GM12878 (cell line): ENCODE measurements at regions of chr3 and their contacts with region 1.

Region 1: GRCh38 chr3:189967254-189967865 is 153.3 kb downstream of the P3H2 start:
- DNase-seq: no peak
- ATAC-seq: peak; percentile 89
- H3K4me3 ChIP-seq: no peak overlapping the region
- H3K27ac ChIP-seq: no peak overlapping the region
- H3K4me1 ChIP-seq: no peaks in the 10 kb centered on the region
- H3K27me3 ChIP-seq: no peaks in the 10 kb centered on the region
- CTCF ChIP-seq: peak; percentile 75 to 81 (median 81)
- EP300 ChIP-seq: no peak
- POLR2A ChIP-seq: no peak
- RAD21 ChIP-seq: peak; percentile 93

Region 2: GRCh38 chr3:189724356-189724755 is 243.0 kb before region 1 on chr3:
- CTCF ChIA-PET with region 1: no interaction called
- POLR2A ChIA-PET with region 1: no interaction called
- RAD21 ChIA-PET with region 1: no interaction called
- SMC1A ChIA-PET with region 1: no interaction called
- in situ Hi-C with region 1: no loop called
- intact Hi-C with region 1: no loop called
- DNase-seq: no peak
- ATAC-seq: no peak
- H3K4me3 ChIP-seq: no peak overlapping the region
- H3K27ac ChIP-seq: no peak overlapping the region
- H3K4me1 ChIP-seq: no peaks in the 10 kb centered on the region
- H3K27me3 ChIP-seq: no peaks in the 10 kb centered on the region
- CTCF ChIP-seq: no peak
- EP300 ChIP-seq: no peak
- POLR2A ChIP-seq: no peak
- RAD21 ChIP-seq: no peak

Region 3: GRCh38 chr3:190017521-190018288 is 50.3 kb after region 1 on chr3:
- CTCF ChIA-PET with region 1: interaction called, 13 read pairs
- POLR2A ChIA-PET with region 1: no interaction called
- RAD21 ChIA-PET with region 1: interaction called, 5 read pairs
- SMC1A ChIA-PET with region 1: interaction called, 8 read pairs
- in situ Hi-C with region 1: no loop called
- intact Hi-C with region 1: no loop called
- DNase-seq: no peak
- ATAC-seq: peak; percentile 75
- H3K4me3 ChIP-seq: no peak overlapping the region
- H3K27ac ChIP-seq: no peak overlapping the region
- H3K4me1 ChIP-seq: no peaks in the 10 kb centered on the region
- H3K27me3 ChIP-seq: no peaks in the 10 kb centered on the region
- CTCF ChIP-seq: peak in 2 of 3 experiments; percentile 12 to 49; a peak in 2 of 6 replicates
- EP300 ChIP-seq: no peak
- POLR2A ChIP-seq: no peak
- RAD21 ChIP-seq: peak; percentile 64

Region 4: DNA sequence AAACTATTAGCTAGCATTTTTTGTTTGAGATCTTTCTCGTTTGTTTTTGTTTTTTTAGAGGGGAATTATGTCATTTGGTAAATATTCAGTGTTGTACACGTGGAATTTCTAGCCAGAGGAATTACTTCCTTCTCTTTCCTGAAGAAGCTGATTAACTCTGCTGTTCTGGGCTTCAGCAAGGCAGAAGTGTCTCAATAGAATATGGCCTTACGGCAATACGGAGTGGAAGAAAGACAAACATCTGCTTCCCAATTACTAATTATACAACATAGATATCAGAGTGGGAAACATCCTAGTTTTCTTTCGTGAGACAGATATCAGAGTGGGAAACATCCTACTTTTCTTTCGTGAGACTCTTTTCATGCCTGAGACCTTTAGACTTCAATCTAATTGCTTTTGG is 141.4 kb after region 1 on chr3:
- CTCF ChIA-PET with region 1: interaction called, 5 read pairs
- POLR2A ChIA-PET with region 1: no interaction called
- RAD21 ChIA-PET with region 1: no interaction called
- SMC1A ChIA-PET with region 1: no interaction called
- in situ Hi-C with region 1: no loop called
- intact Hi-C with region 1: loop called (anchors 5 kb)
- DNase-seq: no peak
- ATAC-seq: no peak
- H3K4me3 ChIP-seq: no peak overlapping the region
- H3K27ac ChIP-seq: no peak overlapping the region
- H3K4me1 ChIP-seq: no peaks in the 10 kb centered on the region
- H3K27me3 ChIP-seq: no peaks in the 10 kb centered on the region
- CTCF ChIP-seq: no peak
- EP300 ChIP-seq: no peak
- POLR2A ChIP-seq: no peak
- RAD21 ChIP-seq: no peak

Region 5: DNA sequence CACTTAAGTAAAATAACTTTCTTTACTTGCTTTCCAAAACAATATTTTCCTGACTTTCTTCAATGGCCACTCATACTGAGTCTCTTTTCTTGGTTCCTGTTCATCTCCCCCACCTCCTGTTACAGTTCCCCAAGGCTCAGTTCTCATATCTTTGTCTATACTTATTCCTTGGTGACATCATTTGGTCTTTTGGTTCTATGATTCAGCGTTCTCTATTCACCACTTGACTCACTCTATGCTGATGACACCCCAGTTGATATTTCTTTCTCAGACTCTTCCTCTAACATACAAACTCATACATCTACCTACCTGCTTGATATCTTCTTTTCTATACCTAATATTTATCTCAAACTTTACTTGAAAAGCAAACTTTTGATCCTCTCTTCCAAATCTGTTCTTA is 238.4 kb after region 1 on chr3:
- CTCF ChIA-PET with region 1: interaction called, 36 read pairs
- POLR2A ChIA-PET with region 1: interaction called, 3 read pairs
- RAD21 ChIA-PET with region 1: interaction called, 27 read pairs
- SMC1A ChIA-PET with region 1: interaction called, 41 read pairs
- in situ Hi-C with region 1: no loop called
- intact Hi-C with region 1: loop called (anchors 1 kb)
- DNase-seq: peak; percentile 42
- ATAC-seq: peak; percentile 81
- H3K4me3 ChIP-seq: no peak overlapping the region
- H3K27ac ChIP-seq: 0 out of 2 replicates have a peak overlapping the region, but pooled peaks have one; percentile 6
- H3K4me1 ChIP-seq: peaks cover 6% of the 10 kb centered on the region
- H3K27me3 ChIP-seq: no peaks in the 10 kb centered on the region
- CTCF ChIP-seq: no peak
- EP300 ChIP-seq: peak in 1 of 2 experiments; percentile 75; a peak in 1 of 4 replicates
- POLR2A ChIP-seq: no peak
- RAD21 ChIP-seq: no peak

Region 6: DNA sequence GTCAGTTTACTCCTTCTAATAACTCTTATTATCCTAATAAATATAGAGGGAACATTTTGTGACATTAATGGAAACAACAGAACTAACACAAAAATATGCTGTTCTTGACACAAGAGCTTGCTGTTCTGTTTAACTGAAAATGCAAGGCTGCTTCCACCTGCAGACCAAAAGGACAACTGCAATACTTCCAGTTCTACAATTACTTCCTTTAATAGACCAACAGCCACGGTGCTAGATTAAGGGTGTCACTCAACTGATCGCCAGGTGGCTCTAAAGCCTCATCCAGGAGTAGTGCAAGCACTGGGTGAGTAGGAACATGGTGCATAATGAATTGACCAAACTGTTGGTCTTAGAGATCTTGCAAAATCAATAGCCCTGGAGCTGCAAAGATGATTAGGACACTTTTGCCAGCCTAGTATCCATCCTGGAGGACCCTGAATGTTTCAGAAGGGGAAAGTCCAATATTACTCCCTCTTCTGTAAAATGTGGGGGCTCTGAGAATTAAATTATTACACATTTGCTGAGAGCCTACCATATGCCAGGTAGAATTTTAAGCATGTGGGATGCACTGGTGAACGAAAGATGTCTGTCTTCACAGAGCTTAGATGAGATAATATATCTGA is 417.0 kb after region 1 on chr3:
- CTCF ChIA-PET with region 1: interaction called, 64 read pairs
- POLR2A ChIA-PET with region 1: no interaction called
- RAD21 ChIA-PET with region 1: interaction called, 31 read pairs
- SMC1A ChIA-PET with region 1: interaction called, 44 read pairs
- in situ Hi-C with region 1: loop called (anchors 10 kb)
- intact Hi-C with region 1: loop called (anchors 2 kb)
- DNase-seq: peak; percentile 19
- ATAC-seq: peak; percentile 94
- H3K4me3 ChIP-seq: no peak overlapping the region
- H3K27ac ChIP-seq: no peak overlapping the region
- H3K4me1 ChIP-seq: no peaks in the 10 kb centered on the region
- H3K27me3 ChIP-seq: no peaks in the 10 kb centered on the region
- CTCF ChIP-seq: peak; percentile 49 to 68 (median 59); a peak in 5 of 6 replicates
- EP300 ChIP-seq: no peak
- POLR2A ChIP-seq: no peak
- RAD21 ChIP-seq: peak; percentile 82

Region 7: DNA sequence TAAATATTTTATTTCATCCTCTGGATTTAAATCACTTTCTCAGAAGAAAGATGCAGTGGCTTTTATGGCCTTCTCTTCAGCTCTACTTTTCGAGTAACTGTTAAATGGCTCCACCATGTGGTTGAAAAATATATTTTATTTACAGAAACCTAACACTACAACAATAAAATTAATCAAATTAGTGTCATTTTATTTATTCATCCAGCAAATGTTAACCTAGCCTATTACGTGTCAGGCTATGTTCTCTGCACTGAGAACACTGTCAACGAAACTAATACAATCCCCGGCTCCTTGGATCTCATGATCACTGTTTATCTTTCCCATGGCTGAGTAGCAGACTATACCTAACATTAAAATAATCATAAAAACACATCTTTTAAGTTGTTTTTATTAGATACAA is 1083.7 kb after region 1 on chr3:
- CTCF ChIA-PET with region 1: interaction called, 4 read pairs
- POLR2A ChIA-PET with region 1: no interaction called
- RAD21 ChIA-PET with region 1: no interaction called
- SMC1A ChIA-PET with region 1: no interaction called
- in situ Hi-C with region 1: no loop called
- intact Hi-C with region 1: loop called (anchors 5 kb)
- DNase-seq: no peak
- ATAC-seq: peak; percentile 76
- H3K4me3 ChIP-seq: no peak overlapping the region
- H3K27ac ChIP-seq: no peak overlapping the region
- H3K4me1 ChIP-seq: no peaks in the 10 kb centered on the region
- H3K27me3 ChIP-seq: no peaks in the 10 kb centered on the region
- CTCF ChIP-seq: peak in 2 of 3 experiments; percentile 26 to 49; a peak in 3 of 6 replicates
- EP300 ChIP-seq: no peak
- POLR2A ChIP-seq: no peak
- RAD21 ChIP-seq: peak; percentile 66